Activated CD8-positive, alpha-beta T cell treated with anti-CD3 and anti-CD28 coated beads, Interleukin-2, amount 10 ng/mL, durations not matched to agents 7 days and 5 days (primary cell): ENCODE measurements at regions of chr11 and their contacts with region 1.

Region 1: GRCh38 chr11:66282468-66283386 is 4.8 kb downstream of the CNIH2 start:
- DNase-seq: peak; percentile 99
- ATAC-seq: peak; percentile 86
- H3K4me3 Mint-ChIP-seq: no peak overlapping the region
- H3K27ac Mint-ChIP-seq: peak overlapping the region; percentile 69
- H3K4me1 Mint-ChIP-seq: peaks cover 44% of the 10 kb centered on the region
- H3K27me3 Mint-ChIP-seq: peaks cover 7% of the 10 kb centered on the region

Region 2: DNA sequence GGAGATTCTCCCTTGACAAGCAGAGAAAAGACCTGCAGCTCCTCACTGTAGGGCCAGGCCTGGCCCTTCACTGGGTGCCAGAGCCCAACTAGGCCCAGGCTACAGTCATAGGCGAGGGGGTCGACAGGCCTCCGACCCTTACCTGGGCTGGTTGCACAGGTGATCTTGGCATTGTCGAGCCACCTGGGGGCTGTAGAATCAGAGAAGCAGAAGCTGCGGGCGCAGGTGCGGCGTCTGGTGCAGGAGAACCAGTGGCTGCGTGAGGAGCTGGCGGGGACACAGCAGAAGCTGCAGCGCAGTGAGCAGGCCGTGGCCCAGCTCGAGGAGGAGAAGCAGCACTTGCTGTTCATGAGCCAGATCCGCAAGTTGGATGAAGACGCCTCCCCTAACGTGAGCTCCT is 21.1 kb before region 1 on chr11:
- CTCF ChIA-PET with region 1: interaction called, 15 read pairs
- POLR2A ChIA-PET with region 1: interaction called, 3 read pairs
- DNase-seq: no peak
- ATAC-seq: no peak
- H3K4me3 Mint-ChIP-seq: no peak overlapping the region
- H3K27ac Mint-ChIP-seq: no peak overlapping the region
- H3K4me1 Mint-ChIP-seq: peaks cover 25% of the 10 kb centered on the region
- H3K27me3 Mint-ChIP-seq: no peaks in the 10 kb centered on the region

Region 3: GRCh38 chr11:66268283-66268951 is 14.3 kb before region 1 on chr11 and contains the start of gene RAB1B:
- CTCF ChIA-PET with region 1: interaction called, 64 read pairs
- POLR2A ChIA-PET with region 1: interaction called, 16 read pairs
- DNase-seq: peak; percentile 100
- ATAC-seq: peak; percentile 86
- H3K4me3 Mint-ChIP-seq: peak within 1 kb of the TSS; percentile 84
- H3K27ac Mint-ChIP-seq: peak within 1 kb of the TSS; percentile 98
- H3K4me1 Mint-ChIP-seq: peaks cover 50% of the 10 kb centered on the region
- H3K27me3 Mint-ChIP-seq: no peaks in the 10 kb centered on the region
- total RNA-seq, gene RAB1B: 160 to 170 TPM